ENCODE measurements at regions of chr19 and their contacts with region 1.

Region 1: DNA sequence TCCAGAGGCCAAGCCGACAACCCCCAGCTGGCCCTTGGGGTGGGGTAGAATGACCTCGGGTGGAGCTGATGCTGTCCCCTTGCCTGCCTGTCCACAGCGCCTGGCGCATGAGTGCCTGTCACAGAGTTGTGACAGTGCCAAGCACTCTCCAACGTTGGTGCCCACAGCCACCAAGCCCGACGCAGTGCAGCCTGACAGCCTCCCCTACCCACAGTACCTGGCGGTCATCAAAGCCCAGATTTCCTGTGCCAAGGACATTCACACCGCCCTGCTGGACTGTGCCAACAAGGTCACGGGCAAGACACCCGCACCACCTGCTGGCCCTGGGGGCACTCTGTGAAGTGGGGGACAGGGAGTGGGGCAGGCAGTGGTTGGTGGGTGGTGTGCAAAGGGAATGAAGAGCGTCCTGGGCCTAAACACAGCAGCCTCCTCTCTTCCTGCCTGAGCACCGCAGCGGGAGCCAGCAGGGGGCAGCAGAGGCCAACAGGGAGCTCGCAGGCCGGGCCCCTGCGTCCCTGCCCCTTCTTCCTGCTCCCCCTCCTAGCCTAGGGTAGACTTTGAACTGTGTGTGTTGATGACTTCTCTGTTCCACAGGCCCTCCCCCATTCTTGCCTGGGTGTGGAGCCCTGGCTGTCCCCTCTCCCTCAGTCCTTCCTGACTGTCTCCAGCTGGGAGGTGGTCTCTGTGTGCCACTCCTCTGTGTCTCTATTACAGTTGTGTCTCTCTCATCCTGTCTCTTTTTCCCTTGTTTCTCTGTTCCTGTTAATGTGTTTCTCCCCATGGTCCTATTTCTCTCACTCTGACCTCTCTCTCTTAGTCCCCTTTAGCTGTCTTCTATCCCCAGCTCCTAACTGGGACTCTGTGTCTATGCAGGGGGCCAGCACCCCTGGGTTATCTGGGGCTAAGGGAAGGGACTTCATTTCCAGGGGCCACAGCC is 6.5 kb downstream of the MED29 start:
- DNase-seq: peak; percentile 98
- H3K4me3 Mint-ChIP-seq: no peak overlapping the region
- H3K27ac Mint-ChIP-seq: peak overlapping the region; percentile 63
- H3K4me1 Mint-ChIP-seq: peaks cover 51% of the 10 kb centered on the region
- H3K27me3 Mint-ChIP-seq: no peaks in the 10 kb centered on the region
- CTCF ChIP-seq: peak; percentile 99

Region 2: DNA sequence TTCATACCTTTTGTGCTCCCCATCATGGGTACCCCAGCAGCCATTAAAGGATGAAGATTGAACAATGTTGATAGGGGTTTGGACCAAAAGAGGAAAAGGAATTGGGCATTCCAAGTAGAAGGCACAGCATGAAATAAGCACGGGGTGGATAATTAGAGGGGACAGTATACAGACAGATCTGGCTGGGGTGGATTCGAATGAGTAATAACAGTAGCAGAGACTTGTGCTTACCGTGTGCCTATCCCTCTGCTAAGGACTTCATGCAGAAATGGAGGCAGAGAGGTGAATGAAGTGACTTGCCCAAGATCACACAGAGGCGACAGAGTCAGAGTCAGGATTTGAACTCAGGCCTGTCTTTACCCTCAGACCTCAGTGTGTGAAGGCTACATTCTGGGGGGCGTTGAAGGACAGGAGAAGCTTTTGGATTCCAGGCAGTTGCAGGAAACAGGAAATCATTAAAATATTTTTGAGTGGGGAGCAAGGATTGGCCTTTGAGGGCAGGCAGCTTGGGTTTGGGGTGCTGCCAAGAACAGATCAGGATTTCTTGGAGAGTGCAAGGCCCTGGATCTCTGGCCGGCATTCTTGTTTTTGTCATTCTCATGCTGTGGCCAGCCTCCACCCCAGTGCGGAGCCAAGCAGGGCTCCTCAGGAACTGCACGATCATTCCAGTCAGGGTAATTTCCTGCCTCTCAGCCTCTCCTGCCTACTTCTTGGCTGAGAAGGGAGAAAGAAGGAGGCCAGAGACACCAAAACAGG is 25.4 kb before region 1 on chr19:
- CTCF ChIA-PET with region 1: no interaction called
- intact Hi-C with region 1: no loop called
- DNase-seq: no peak
- H3K4me3 Mint-ChIP-seq: no peak overlapping the region
- H3K27ac Mint-ChIP-seq: no peak overlapping the region
- H3K4me1 Mint-ChIP-seq: no peaks in the 10 kb centered on the region
- H3K27me3 Mint-ChIP-seq: no peaks in the 10 kb centered on the region
- CTCF ChIP-seq: no peak

Region 3: GRCh38 chr19:39412100-39412866 is 14.7 kb after region 1 on chr19 and contains the start of gene PLEKHG2:
- CTCF ChIA-PET with region 1: interaction called, 52 read pairs
- intact Hi-C with region 1: loop called (anchors 1 kb)
- DNase-seq: peak; percentile 99
- H3K4me3 Mint-ChIP-seq: peak within 1 kb of the TSS; percentile 77
- H3K27ac Mint-ChIP-seq: peak within 1 kb of the TSS; percentile 94
- H3K4me1 Mint-ChIP-seq: peaks cover 45% of the 10 kb centered on the region
- H3K27me3 Mint-ChIP-seq: no peaks in the 10 kb centered on the region
- CTCF ChIP-seq: peak; percentile 93
- total RNA-seq, gene PLEKHG2: 64.1 and 65.3 TPM in 2 replicates